GM12878 (cell line): ENCODE measurements at regions of chr15 and their contacts with region 1.

Region 1: DNA sequence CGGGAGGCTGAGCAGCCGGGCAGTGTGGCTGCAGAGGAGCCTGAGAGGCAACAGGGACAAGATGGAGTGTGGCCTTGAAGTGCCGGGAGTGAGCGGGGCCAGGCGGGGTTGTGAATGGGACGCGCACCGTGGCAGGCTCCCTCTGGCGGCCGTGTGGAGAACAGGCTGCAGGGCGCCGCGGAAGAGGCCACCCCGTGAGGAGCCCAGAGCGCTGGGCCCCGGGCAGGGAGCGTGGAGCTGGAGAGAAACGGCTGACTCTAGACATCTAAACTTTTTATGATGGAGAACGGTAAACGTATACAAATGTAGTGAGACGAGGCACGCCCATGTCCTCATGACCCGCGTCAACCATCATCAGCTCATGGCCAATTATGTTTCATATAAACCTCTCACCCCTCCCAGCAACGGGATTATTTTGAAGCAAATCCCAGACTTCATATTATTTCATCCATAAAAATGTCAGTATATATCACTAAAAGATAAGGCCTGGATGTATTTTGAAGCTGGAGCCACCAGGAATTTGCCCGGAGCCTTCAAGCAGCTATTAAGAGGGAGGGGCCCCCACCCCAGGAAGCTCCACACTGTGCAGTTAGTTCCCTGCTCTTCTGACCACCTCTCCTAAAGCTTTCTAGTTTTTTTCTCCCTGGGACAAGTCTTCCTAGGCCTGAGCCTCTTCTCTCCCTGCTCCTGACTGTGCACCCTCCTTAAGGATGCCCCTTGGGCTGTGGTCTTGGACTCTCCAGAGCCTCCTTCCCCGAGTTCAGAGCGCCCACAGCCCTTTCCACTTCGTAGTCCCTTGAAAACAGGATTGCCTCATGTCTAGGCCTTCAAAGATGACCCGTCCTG is 149.4 kb downstream of the SMAD6 start:
- DNase-seq: no peak
- ATAC-seq: peak; percentile 99
- H3K4me3 ChIP-seq: no peak overlapping the region
- H3K27ac ChIP-seq: no peak overlapping the region
- H3K4me1 ChIP-seq: no peaks in the 10 kb centered on the region
- H3K27me3 ChIP-seq: no peaks in the 10 kb centered on the region
- CTCF ChIP-seq: peak; percentile 85 to 98 (median 90)
- EP300 ChIP-seq: no peak
- POLR2A ChIP-seq: no peak
- RAD21 ChIP-seq: peak; percentile 67

Region 2: GRCh38 chr15:66598095-66598815 is 253.2 kb before region 1 on chr15:
- CTCF ChIA-PET with region 1: interaction called, 37 read pairs
- POLR2A ChIA-PET with region 1: no interaction called
- RAD21 ChIA-PET with region 1: interaction called, 20 read pairs
- SMC1A ChIA-PET with region 1: interaction called, 12 read pairs
- in situ Hi-C with region 1: loop called (anchors 10 kb)
- intact Hi-C with region 1: loop called (anchors 1 kb)
- DNase-seq: no peak
- ATAC-seq: no peak
- H3K4me3 ChIP-seq: no peak overlapping the region
- H3K27ac ChIP-seq: no peak overlapping the region
- H3K4me1 ChIP-seq: no peaks in the 10 kb centered on the region
- H3K27me3 ChIP-seq: no peaks in the 10 kb centered on the region; a peak in 1 of 4 replicates
- CTCF ChIP-seq: no peak
- EP300 ChIP-seq: no peak
- POLR2A ChIP-seq: no peak
- RAD21 ChIP-seq: no peak

Region 3: DNA sequence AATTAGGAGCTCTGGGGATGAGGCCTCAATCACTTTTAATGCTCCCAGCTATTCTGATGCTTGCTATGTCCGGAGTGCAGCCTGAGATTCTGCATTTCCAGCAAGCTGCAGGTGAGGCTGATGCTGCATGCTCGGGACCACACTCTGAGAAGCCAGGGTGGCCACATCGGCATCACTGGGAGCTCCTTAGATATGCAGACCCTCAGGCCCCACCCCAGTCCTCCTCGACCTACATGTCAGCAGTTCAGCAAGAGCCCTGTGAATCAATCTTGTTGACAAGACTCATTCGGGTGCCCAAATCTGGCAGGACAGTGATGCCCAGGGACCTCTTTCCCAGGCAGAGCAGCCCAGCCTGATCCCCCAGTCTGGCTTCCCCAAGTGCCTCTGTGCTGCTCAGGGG is 241.6 kb before region 1 on chr15:
- CTCF ChIA-PET with region 1: interaction called, 13 read pairs
- POLR2A ChIA-PET with region 1: no interaction called
- RAD21 ChIA-PET with region 1: interaction called, 3 read pairs
- SMC1A ChIA-PET with region 1: interaction called, 14 read pairs
- in situ Hi-C with region 1: loop called (anchors 10 kb)
- intact Hi-C with region 1: loop called (anchors 5 kb)
- DNase-seq: no peak
- ATAC-seq: no peak
- H3K4me3 ChIP-seq: no peak overlapping the region
- H3K27ac ChIP-seq: no peak overlapping the region
- H3K4me1 ChIP-seq: no peaks in the 10 kb centered on the region; the same call in 1 of the 2 replicates
- H3K27me3 ChIP-seq: no peaks in the 10 kb centered on the region; a peak in 1 of 4 replicates
- CTCF ChIP-seq: no peak
- EP300 ChIP-seq: no peak
- POLR2A ChIP-seq: no peak
- RAD21 ChIP-seq: no peak

Region 4: DNA sequence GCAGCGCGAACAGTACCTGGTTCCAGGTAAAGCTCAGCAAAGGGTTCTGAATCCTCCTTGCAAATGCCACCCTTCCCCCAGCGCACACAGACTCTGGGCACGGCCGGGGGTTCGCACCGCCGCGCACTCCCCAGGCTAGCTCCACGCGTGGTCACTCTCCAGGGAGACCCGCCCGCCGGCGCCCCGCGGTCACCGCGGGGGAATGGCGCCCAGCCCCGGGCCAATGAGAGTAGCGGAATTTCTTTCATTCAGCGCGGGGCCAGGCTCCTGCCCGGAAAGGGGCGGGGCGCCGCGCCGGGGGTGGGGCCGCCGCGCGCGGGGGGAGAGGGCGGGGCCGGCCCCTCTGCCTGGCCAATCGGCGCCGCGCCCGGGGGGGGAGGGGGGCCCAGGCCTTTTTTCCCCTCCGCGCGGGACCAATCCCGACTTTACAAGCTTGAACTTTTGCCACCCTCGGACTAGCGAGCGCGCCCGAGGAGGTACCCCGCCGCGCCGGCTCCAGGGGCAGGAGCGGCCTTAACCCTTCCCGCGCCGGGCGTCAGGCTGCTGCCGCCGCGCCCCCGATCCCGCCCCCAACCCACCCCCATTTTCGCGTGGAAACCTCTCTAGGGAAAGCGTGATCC is 150.5 kb before region 1 on chr15:
- CTCF ChIA-PET with region 1: interaction called, 3 read pairs
- POLR2A ChIA-PET with region 1: no interaction called
- RAD21 ChIA-PET with region 1: no interaction called
- SMC1A ChIA-PET with region 1: no interaction called
- in situ Hi-C with region 1: no loop called
- intact Hi-C with region 1: loop called (anchors 10 kb)
- DNase-seq: no peak
- ATAC-seq: peak; percentile 86
- H3K4me3 ChIP-seq: peak overlapping the region; percentile 93
- H3K27ac ChIP-seq: no peak overlapping the region
- H3K4me1 ChIP-seq: peaks cover 16% of the 10 kb centered on the region
- H3K27me3 ChIP-seq: peaks cover 11 to 15% of the 10 kb centered on the region in 2 experiments
- CTCF ChIP-seq: no peak
- EP300 ChIP-seq: no peak
- POLR2A ChIP-seq: no peak; the same call in 1 of the 2 replicates
- RAD21 ChIP-seq: no peak

Region 5: GRCh38 chr15:66730168-66731021 is 121.1 kb before region 1 on chr15:
- CTCF ChIA-PET with region 1: no interaction called
- POLR2A ChIA-PET with region 1: no interaction called
- RAD21 ChIA-PET with region 1: no interaction called
- SMC1A ChIA-PET with region 1: no interaction called
- in situ Hi-C with region 1: no loop called
- intact Hi-C with region 1: no loop called
- DNase-seq: no peak
- ATAC-seq: peak; percentile 52
- H3K4me3 ChIP-seq: no peak overlapping the region
- H3K27ac ChIP-seq: no peak overlapping the region
- H3K4me1 ChIP-seq: no peaks in the 10 kb centered on the region
- H3K27me3 ChIP-seq: no peaks in the 10 kb centered on the region; a peak in 3 of 4 replicates
- CTCF ChIP-seq: no peak
- EP300 ChIP-seq: no peak
- POLR2A ChIP-seq: no peak
- RAD21 ChIP-seq: no peak

Region 6: DNA sequence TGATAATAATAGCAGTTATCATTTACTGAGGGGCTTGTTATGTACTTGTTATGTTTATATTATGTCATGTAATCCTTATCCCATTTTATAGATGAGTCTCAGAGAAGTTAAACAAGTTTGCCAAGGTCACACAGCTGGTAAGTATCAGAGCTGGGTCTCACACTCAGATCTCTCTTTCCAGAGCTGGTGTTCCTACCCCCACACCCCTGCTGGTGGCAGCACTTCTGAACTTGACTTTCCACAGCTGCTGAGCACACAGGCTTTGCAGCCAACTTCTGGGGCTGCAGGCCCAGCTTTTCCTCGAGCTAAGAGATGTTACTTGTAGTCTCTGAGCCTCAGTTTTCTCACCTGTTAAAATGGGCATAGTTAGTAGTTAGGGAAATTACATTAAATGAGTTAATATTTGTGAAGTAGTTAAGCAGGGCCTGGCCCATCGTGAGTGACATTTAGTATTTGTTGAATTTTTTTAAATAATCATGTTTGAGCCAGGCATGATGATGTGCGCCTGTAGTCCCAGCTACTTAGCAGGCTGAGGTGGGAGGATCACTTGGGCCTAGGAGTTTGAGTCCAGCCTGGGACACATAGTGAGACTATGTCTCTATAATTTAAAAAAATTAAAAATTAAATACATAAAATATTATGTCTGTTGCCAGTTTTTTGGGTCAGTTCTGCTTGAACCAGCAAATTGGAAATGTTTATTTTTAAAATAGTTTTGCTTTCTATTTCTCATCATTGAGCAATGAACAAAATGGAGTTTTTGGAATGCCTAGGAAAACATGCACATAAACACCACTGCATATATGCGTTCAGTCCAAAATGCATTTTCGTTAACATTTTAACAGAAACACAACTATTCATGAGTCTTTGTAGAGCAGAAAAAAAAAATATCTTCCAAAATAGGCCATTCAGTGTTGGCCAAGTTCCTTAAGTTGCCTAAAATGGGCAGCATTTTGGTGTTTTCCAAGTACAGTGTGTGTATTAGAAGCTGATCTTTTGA is 62.1 kb before region 1 on chr15:
- CTCF ChIA-PET with region 1: interaction called, 11 read pairs
- POLR2A ChIA-PET with region 1: no interaction called
- RAD21 ChIA-PET with region 1: no interaction called
- SMC1A ChIA-PET with region 1: interaction called, 7 read pairs
- in situ Hi-C with region 1: no loop called
- intact Hi-C with region 1: no loop called
- DNase-seq: no peak
- ATAC-seq: peak; percentile 82
- H3K4me3 ChIP-seq: no peak overlapping the region
- H3K27ac ChIP-seq: no peak overlapping the region
- H3K4me1 ChIP-seq: no peaks in the 10 kb centered on the region
- H3K27me3 ChIP-seq: no peaks in the 10 kb centered on the region
- CTCF ChIP-seq: peak; percentile 31 to 36 (median 32); a peak in 4 of 6 replicates
- EP300 ChIP-seq: no peak
- POLR2A ChIP-seq: no peak
- RAD21 ChIP-seq: no peak

Region 7: DNA sequence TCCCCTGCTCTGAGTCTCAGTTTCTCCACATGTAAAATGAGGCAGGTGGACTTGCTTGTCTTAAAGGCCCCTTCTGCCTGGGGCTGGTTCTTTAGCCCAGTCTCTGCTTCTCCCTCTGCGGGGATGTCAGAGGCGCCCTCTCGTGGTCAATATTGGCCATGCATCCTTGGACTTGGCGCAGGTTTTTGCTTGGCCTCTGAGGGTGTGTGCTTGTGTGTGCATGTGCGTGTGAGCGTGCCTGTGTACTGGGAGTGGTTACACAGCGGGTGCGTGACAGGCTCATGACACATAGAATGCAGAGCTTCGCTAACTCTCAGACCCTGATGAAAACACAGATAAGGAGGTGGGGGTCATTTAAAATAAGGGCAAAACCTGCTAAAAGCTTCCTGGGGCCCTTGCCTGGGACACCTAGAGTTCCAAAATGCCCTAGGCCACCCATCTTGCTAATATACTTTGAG is 11.5 kb after region 1 on chr15:
- CTCF ChIA-PET with region 1: interaction called, 28 read pairs
- POLR2A ChIA-PET with region 1: no interaction called
- RAD21 ChIA-PET with region 1: no interaction called
- SMC1A ChIA-PET with region 1: interaction called, 8 read pairs
- in situ Hi-C with region 1: no loop called
- intact Hi-C with region 1: no loop called
- DNase-seq: peak; percentile 33
- ATAC-seq: peak; percentile 95
- H3K4me3 ChIP-seq: no peak overlapping the region
- H3K27ac ChIP-seq: no peak overlapping the region
- H3K4me1 ChIP-seq: peaks cover 14% of the 10 kb centered on the region
- H3K27me3 ChIP-seq: no peaks in the 10 kb centered on the region; a peak in 1 of 4 replicates
- CTCF ChIP-seq: peak; percentile 87 to 98 (median 95)
- EP300 ChIP-seq: no peak
- POLR2A ChIP-seq: no peak
- RAD21 ChIP-seq: peak; percentile 57

Region 8: GRCh38 chr15:66894986-66895780 is 43.7 kb after region 1 on chr15:
- CTCF ChIA-PET with region 1: no interaction called
- POLR2A ChIA-PET with region 1: no interaction called
- RAD21 ChIA-PET with region 1: no interaction called
- SMC1A ChIA-PET with region 1: no interaction called
- in situ Hi-C with region 1: no loop called
- intact Hi-C with region 1: no loop called
- DNase-seq: no peak
- ATAC-seq: no peak
- H3K4me3 ChIP-seq: no peak overlapping the region
- H3K27ac ChIP-seq: no peak overlapping the region
- H3K4me1 ChIP-seq: no peaks in the 10 kb centered on the region
- H3K27me3 ChIP-seq: no peaks in the 10 kb centered on the region
- CTCF ChIP-seq: no peak
- EP300 ChIP-seq: no peak
- POLR2A ChIP-seq: no peak
- RAD21 ChIP-seq: no peak